ENCODE measurements at regions of chr2 and their contacts with region 1.

Region 1: DNA sequence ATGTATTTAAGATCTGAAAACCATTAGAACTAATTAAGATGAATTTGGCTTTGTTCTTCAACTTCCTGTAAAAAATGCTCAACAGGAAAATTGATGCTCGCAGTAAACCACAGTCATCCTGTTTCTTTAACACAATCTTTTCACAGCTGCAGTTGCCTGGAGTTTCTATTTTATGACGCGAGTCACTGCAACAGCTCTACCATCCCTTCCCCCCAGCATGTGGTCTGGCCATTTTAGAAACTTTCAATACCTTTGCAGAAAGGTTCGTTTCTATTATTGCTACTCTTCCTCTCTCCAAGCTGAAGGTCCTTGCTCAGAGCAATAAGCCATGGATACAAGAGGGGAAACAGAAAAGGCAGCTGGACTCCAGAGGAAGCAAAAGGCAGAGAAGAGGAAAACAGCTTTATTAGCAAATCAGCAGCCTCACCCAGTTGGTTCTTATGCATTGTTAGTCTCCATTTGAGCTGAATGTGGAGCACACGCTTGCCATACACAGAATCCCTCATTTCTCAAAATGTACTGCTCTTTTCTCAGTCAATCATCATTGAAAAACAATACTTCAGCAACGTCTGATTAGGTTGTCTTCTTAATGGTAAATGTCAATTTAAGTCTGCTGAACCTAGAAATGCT is 3.9 kb downstream of the WIPF1 start:
- DNase-seq: no peak
- ATAC-seq: peak; percentile 70
- H3K4me3 Mint-ChIP-seq: peak overlapping the region; percentile 89
- H3K27ac Mint-ChIP-seq: peak overlapping the region; percentile 99
- H3K4me1 Mint-ChIP-seq: peaks cover 57% of the 10 kb centered on the region
- H3K27me3 Mint-ChIP-seq: no peaks in the 10 kb centered on the region

Region 2: GRCh38 chr2:174492963-174493431 is 100.7 kb before region 1 on chr2:
- POLR2A ChIA-PET with region 1: interaction called, 20 read pairs
- DNase-seq: peak; percentile 64
- ATAC-seq: peak; percentile 81
- H3K4me3 Mint-ChIP-seq: peak overlapping the region; percentile 88
- H3K27ac Mint-ChIP-seq: peak overlapping the region; percentile 98
- H3K4me1 Mint-ChIP-seq: peaks cover 59% of the 10 kb centered on the region
- H3K27me3 Mint-ChIP-seq: no peaks in the 10 kb centered on the region

Region 3: DNA sequence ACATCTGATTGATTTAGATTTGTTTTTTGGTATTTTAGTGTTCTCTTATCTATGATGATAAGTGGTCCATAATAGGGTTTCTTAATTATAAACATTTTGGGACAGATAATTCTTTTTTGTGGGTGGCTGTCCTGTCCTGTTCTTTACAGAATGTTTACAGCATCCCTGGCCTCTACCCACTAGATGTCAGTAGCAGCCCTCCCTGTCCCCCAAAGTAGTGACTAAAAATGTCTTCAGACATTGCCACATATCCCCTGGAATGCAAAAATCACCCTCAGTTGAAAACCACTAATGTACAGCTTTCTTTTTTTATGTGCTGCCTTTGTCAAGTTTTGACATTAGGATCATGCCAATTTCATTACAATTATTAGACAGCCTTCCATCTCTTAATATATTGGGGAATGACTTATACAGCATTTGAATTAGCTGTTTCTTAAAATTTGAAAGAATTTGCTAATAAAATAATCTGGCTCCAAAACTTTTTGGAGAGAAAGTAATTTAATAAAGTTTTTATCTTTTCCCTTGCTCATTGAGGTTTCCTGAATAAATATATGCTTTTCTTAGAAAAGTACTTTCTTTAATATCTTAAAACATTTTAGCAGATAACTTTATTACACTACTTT is 15.6 kb before region 1 on chr2:
- POLR2A ChIA-PET with region 1: interaction called, 16 read pairs
- DNase-seq: no peak
- ATAC-seq: peak; percentile 69
- H3K4me3 Mint-ChIP-seq: no peak overlapping the region
- H3K27ac Mint-ChIP-seq: no peak overlapping the region
- H3K4me1 Mint-ChIP-seq: peaks cover 56% of the 10 kb centered on the region
- H3K27me3 Mint-ChIP-seq: no peaks in the 10 kb centered on the region

Region 4: DNA sequence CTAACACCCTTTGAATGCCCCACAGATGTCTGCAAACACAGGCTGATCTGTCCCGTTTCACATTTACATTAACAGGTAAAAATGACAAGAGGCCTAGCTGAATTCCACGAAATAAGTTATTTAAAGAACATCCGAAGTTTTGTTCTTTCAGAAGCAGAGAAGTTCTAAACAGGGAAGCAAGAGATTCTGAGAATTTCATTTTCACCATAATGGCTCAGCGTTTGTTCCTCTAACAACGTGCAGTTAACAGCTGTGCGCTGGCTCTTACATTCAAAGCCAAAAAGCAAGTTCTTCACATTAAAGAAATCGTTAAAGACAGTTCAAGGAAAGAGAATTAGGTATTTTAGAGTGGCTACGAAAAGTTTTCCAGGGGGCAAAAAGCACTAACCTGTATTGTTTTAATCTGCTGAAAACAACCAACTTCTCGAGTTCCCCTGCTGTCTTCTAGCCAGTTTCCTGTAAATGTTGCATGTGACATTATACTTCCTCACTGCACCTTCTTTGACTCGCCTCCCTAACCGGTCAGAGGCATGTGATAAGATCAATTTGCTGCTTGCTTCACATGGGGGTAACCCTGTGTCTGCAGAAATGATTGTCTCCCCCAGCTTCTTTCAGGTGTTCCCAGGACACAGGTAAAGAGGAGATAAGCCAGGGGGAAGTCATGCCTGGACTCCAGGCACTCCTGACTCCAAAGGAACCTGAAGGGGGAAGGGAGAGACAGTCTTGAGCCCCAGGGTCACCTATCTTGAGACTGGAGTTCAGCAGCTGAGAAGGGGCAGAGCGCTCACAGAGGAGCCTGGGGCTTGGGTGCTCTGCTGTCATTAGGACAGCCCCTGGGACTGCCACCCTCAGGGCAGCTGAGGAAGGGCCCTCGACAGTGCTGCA is 40.7 kb after region 1 on chr2:
- POLR2A ChIA-PET with region 1: interaction called, 214 read pairs
- DNase-seq: peak; percentile 65
- ATAC-seq: peak; percentile 82
- H3K4me3 Mint-ChIP-seq: peak overlapping the region; percentile 93
- H3K27ac Mint-ChIP-seq: peak overlapping the region; percentile 98
- H3K4me1 Mint-ChIP-seq: peaks cover 66% of the 10 kb centered on the region
- H3K27me3 Mint-ChIP-seq: no peaks in the 10 kb centered on the region

Region 5: GRCh38 chr2:174682578-174683391 is 89.1 kb after region 1 on chr2:
- POLR2A ChIA-PET with region 1: interaction called, 63 read pairs
- DNase-seq: peak; percentile 80
- ATAC-seq: peak; percentile 70
- H3K4me3 Mint-ChIP-seq: peak overlapping the region; percentile 91
- H3K27ac Mint-ChIP-seq: peak overlapping the region; percentile 93
- H3K4me1 Mint-ChIP-seq: peaks cover 56% of the 10 kb centered on the region
- H3K27me3 Mint-ChIP-seq: no peaks in the 10 kb centered on the region

Region 6: GRCh38 chr2:174688079-174688478 is 94.4 kb after region 1 on chr2:
- POLR2A ChIA-PET with region 1: interaction called, 63 read pairs
- DNase-seq: no peak
- ATAC-seq: peak; percentile 61
- H3K4me3 Mint-ChIP-seq: no peak overlapping the region
- H3K27ac Mint-ChIP-seq: peak overlapping the region; percentile 8
- H3K4me1 Mint-ChIP-seq: peaks cover 35% of the 10 kb centered on the region
- H3K27me3 Mint-ChIP-seq: no peaks in the 10 kb centered on the region